ENCODE measurements at regions of chr2 and their contacts with region 1.

Region 1: GRCh38 chr2:101717071-101717845 is 19.8 kb downstream of the MAP4K4 start:
- DNase-seq: no peak
- H3K4me3 Mint-ChIP-seq: peak overlapping the region; percentile 59
- H3K27ac Mint-ChIP-seq: peak overlapping the region; percentile 90
- H3K4me1 Mint-ChIP-seq: peaks cover 71% of the 10 kb centered on the region
- H3K27me3 Mint-ChIP-seq: no peaks in the 10 kb centered on the region

Region 2: GRCh38 chr2:101272045-101272784 is 445.0 kb before region 1 on chr2:
- intact Hi-C with region 1: loop called (anchors 1 kb)
- DNase-seq: no peak
- H3K4me3 Mint-ChIP-seq: peak overlapping the region; percentile 59
- H3K27ac Mint-ChIP-seq: peak overlapping the region; percentile 81
- H3K4me1 Mint-ChIP-seq: peaks cover 48% of the 10 kb centered on the region
- H3K27me3 Mint-ChIP-seq: no peaks in the 10 kb centered on the region

Region 3: DNA sequence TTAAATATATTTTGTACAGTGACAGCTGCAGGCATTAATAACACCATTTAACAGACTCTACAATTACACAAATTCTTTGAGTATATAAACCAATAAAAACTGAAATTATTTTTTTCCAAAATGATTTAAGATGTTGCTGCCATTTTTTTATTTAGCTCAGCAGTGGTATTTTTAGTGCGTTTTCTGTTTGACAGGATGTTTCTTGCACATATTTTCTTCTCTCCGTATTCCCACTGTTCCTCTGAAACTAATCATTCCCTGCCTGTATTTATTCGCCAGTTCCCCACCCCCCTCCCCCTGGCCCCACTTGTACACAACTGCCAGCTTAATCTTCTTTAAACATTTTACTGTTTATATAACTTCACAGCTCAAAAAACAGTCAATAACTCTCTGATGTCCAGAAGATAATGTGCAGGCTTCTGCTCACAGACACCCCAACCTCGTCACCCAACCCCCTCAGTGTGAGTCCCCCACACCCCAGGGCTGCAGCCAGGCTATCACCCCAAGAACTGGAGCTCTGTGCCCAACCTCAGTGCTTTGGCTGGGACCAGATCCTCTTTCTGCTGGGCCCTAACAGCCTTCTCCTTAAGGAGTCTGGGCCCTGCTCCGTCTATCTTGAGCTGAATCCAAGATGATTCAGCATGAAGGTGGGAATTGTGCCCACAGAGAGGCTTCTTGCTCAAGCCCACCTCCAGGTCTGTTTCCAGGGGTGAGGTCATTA is 61.4 kb before region 1 on chr2:
- intact Hi-C with region 1: loop called (anchors 1 kb)
- DNase-seq: no peak
- H3K4me3 Mint-ChIP-seq: no peak overlapping the region
- H3K27ac Mint-ChIP-seq: no peak overlapping the region
- H3K4me1 Mint-ChIP-seq: peaks cover 18% of the 10 kb centered on the region
- H3K27me3 Mint-ChIP-seq: no peaks in the 10 kb centered on the region

Region 4: DNA sequence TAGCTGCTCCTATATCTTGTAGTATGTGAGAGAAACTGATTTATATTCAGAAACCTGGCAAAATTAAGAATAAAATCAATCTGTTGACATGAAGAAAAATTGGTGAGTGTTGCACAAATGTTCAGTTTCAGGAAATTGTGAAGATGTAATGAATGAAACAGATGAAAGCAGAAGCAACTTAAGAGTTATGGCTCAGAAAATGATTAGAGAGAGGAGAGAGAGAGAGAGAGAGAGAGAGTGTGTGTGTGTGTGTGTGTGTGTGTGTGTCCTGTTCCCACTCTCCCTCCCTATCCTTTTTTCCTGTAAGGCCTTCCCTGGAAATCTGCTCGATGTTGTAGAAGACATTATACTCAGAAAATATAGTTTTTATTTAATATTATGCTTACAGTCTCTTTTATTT is 11.6 kb after region 1 on chr2:
- intact Hi-C with region 1: loop called (anchors 1 kb)
- DNase-seq: no peak
- H3K4me3 Mint-ChIP-seq: no peak overlapping the region
- H3K27ac Mint-ChIP-seq: peak overlapping the region; percentile 62
- H3K4me1 Mint-ChIP-seq: peaks cover 85% of the 10 kb centered on the region
- H3K27me3 Mint-ChIP-seq: no peaks in the 10 kb centered on the region

Region 5: GRCh38 chr2:101759162-101759561 is 41.9 kb after region 1 on chr2:
- intact Hi-C with region 1: loop called (anchors 2 kb)
- DNase-seq: no peak
- H3K4me3 Mint-ChIP-seq: no peak overlapping the region
- H3K27ac Mint-ChIP-seq: no peak overlapping the region
- H3K4me1 Mint-ChIP-seq: peaks cover 69% of the 10 kb centered on the region
- H3K27me3 Mint-ChIP-seq: no peaks in the 10 kb centered on the region

Region 6: DNA sequence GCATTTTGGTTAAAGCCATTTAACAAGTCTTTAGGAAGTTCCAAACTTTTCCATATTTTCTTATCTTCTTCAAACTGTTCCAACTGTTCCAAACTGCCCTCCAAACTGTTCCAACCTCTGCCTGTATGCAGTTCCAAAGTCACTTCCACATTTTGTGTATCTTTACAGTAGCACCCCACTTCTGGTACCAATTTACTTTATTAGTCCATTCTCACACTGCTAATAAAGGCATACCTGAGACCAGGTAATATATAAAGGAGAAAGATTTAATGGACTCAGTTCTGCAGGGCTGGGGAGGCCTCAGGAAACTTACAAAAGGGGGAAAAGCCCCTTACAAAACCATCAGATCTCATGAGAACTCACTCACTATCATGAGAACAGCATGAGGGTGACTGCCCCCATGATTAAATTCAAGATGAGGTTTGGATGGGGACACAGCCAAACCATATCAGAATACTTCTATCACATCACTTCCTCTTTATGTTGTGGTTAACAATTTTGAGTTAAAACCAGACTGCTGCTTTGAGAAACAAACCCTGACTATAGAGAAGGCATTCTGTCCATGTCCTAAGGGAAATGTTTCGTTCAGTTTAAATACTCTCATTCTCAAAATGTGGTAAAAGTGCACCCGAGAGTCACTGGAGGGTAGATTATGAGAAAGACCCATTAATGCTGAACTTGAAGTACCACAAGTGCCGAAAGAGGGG is 649.3 kb after region 1 on chr2:
- intact Hi-C with region 1: loop called (anchors 5 kb)
- DNase-seq: no peak
- H3K4me3 Mint-ChIP-seq: peak overlapping the region; percentile 79
- H3K27ac Mint-ChIP-seq: peak overlapping the region; percentile 97
- H3K4me1 Mint-ChIP-seq: peaks cover 97% of the 10 kb centered on the region
- H3K27me3 Mint-ChIP-seq: no peaks in the 10 kb centered on the region

Measured in activated T-helper 1 cell treated with anti-CD3 and anti-CD28 coated beads, Interleukin-12 subunit alpha, Interleukin-12 subunit beta, Interleukin-2, Interleukin-4 antibody, amounts not matched to agents 30 ng/mL and 10 ng/mL and 1 ng/mL, durations not matched to agents 14 hours and 24 hours and 36 hours (primary cell).